Activated T-helper 2 cell treated with anti-CD3 and anti-CD28 coated beads, Interferon-gamma antibody, Interleukin-2, Interleukin-4, amounts not matched to agents 10 μg/mL and 5 μg/mL and 100 μg/mL, durations not matched to agents 14 hours and 24 hours and 36 hours (primary cell): ENCODE measurements at regions of chr1 and their contacts with region 1.

Region 1: DNA sequence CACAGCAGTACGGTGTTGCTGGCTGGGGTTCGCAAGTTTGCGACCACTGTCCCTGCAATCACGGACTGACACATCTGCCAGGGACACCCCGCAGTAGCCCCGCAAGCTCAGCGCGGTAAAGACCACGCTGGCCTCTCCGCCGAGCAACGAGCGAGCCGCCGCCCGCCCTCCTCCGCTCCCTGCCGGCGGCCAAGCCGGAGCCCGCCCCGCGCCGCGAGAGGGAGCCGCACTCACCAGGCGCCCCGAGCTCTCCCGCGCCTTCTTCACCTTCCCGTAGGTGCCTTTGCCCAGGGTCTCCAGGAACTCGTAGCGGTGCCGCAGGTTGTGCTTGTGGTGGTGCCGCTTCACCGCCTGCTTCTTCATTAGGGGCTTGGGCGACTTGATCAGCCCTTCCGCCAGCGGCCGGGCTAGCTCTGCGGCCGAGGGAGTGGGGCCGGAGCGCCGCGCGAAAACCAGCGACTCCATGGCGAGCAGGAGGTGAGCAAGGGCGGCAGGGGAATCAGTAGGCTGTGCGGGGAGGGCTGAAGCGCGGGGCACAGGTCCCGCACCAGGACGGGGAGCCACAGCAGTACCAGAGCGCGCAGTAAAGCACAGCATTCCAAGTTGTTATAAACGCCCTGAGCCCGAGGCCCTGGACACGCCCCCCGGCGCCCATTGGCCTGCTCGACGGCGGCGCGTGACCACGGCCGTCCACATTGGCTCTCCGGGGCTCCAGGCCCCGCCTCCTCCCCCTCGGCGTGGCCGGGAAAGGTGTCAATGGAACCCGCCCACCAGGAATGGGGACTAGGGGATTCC is at the start of gene NUAK2:
- DNase-seq: peak; percentile 67
- H3K4me3 Mint-ChIP-seq: peak within 1 kb of the TSS; percentile 88
- H3K27ac Mint-ChIP-seq: peak within 1 kb of the TSS; percentile 15
- H3K4me1 Mint-ChIP-seq: peaks cover 45% of the 10 kb centered on the region
- H3K27me3 Mint-ChIP-seq: peaks cover 46% of the 10 kb centered on the region
- total RNA-seq, gene NUAK2: 0.41 and 0.44 TPM in 2 replicates

Region 2: DNA sequence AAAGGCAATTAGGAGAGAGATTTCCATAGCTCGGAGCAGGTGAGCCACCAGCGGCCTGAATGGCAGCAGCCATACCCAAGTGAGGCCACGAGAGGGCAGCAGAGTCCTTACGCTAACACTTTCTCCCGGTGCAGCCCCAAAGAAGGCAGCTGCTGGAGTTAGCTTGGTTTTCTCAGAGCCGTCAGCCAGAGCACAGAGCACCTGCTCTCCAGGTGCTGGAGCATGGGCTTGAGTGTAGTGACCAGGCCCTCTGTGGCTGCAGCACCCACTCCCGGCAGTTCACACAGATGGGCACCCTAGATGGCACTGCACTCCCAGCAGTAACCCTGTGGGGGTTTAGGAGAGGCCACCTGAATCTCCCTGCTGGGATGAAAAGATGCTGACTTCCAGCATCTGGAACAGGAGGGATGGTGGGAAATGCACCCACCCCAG is 47.8 kb before region 1 on chr1:
- intact Hi-C with region 1: loop called (anchors 1 kb)
- DNase-seq: peak; percentile 73
- H3K4me3 Mint-ChIP-seq: no peak overlapping the region
- H3K27ac Mint-ChIP-seq: no peak overlapping the region
- H3K4me1 Mint-ChIP-seq: peaks cover 14% of the 10 kb centered on the region
- H3K27me3 Mint-ChIP-seq: peaks cover 4% of the 10 kb centered on the region

Region 3: DNA sequence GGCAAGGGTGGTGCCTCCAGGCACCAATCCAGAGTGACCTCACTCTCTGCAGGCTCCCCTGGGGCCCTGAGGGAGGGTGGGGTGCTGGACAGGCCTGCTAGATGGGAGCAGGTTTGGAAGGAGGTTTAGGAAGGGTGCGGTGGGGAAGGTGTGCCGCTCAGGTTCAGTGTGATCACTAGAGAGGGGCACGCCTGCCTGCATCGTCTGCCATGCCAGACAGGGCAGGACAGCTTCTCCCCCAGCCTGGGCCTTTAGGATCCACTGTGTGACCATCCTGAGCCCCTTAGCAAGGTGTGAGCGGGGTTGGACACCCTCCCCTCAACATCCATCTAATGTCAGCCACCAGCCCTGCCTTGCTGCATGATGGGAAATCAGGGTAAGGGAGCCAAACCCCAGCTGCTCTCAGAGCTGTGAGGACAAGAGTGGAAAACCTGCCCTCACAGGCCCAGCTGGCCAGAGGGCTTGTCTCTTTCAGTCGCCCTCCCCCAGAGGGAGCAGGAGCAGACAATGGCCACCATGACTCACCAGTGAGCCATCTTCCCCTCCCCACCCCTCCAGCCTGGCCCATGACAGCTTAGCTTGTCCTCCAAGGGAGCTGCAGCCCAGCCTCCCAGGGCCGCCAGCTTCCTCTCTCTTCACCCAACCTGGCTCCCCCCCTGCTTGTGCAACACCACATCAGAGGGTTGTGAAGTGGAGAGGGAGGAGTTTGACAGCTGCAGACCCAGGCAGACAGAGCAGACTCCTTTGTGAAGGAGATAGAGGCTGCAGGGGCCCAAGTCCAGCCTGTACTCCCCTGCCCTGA is 36.8 kb before region 1 on chr1:
- intact Hi-C with region 1: loop called (anchors 1 kb)
- DNase-seq: peak; percentile 86
- H3K4me3 Mint-ChIP-seq: no peak overlapping the region
- H3K27ac Mint-ChIP-seq: peak overlapping the region; percentile 85
- H3K4me1 Mint-ChIP-seq: peaks cover 69% of the 10 kb centered on the region
- H3K27me3 Mint-ChIP-seq: peaks cover 13% of the 10 kb centered on the region

Region 4: GRCh38 chr1:205335643-205336091 is 14.3 kb after region 1 on chr1:
- intact Hi-C with region 1: loop called (anchors 2 kb)
- DNase-seq: peak; percentile 57
- H3K4me3 Mint-ChIP-seq: no peak overlapping the region
- H3K27ac Mint-ChIP-seq: no peak overlapping the region
- H3K4me1 Mint-ChIP-seq: no peaks in the 10 kb centered on the region
- H3K27me3 Mint-ChIP-seq: peaks cover 35% of the 10 kb centered on the region

Region 5: DNA sequence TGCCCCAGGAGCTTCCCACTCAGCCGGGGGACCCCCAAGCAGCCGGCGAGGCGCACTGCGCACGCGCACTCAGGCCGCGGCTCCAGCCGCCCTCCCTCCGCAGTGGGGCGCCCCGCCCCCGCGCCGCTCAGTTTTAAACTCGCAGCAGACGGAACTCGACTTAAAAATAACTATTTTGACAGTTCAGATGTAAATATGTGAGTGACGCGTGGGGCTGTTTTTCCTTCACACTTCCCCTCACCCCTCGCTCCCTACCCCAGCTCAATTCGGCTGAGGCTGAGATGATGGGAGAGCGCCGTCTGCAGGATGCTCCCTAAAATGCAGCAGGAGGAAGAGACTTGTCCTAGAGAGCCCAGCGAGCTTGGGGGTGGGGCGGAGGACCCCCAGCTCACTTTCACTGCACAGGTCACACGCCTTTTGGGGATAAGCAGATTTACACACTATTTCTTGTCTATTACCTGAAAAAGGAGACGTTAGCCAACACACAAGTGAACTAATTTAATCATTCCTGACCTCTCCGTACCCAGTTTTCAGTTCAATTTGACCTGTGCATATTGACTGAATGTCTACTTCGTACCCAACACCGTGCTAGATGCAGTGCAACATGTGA is 109.4 kb after region 1 on chr1:
- intact Hi-C with region 1: no loop called
- DNase-seq: peak; percentile 32
- H3K4me3 Mint-ChIP-seq: peak overlapping the region; percentile 74
- H3K27ac Mint-ChIP-seq: no peak overlapping the region
- H3K4me1 Mint-ChIP-seq: peaks cover 4% of the 10 kb centered on the region
- H3K27me3 Mint-ChIP-seq: peaks cover 33% of the 10 kb centered on the region